Endothelial cell of umbilical vein (primary cell): ENCODE measurements at regions of chr18 and their contacts with region 1.

Region 1: DNA sequence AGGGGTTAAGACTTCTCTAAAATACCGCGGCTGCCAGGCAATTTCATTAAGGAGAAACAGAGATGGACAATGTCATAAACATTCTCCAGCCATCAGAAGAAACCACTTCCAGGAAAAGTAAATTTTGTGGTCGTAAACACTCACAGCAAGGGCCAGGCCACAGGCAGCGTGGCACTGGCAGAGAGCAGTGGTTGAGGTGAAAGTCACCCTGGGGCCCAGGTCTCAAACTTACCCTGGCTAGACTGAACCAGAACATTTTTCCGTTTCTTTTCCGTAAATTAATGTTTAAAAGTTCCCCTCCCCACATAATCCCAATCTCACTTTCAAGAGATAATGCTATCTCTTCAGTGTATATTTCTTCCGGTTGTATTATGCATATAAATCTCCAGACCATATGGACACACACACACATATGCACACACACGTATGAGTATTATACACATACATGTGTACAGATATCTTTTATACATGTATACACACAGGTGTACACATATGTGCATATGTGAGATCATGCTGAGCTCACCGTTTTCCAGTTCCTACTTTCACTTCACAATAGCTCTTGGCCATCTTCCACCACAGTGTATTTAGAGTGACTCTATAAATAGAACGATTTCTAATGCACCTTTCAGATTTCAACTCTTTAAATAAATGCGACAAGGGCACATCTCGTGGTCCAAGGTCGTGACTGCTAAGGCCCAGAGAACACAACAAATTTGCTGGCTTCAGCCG is 90.1 kb downstream of the MALT1 start:
- DNase-seq: no peak
- H3K4me3 ChIP-seq: no peak overlapping the region
- H3K27ac ChIP-seq: no peak overlapping the region
- H3K4me1 ChIP-seq: no peaks in the 10 kb centered on the region
- H3K27me3 ChIP-seq: peaks cover 2 to 8% of the 10 kb centered on the region in 2 experiments
- CTCF ChIP-seq: no peak
- POLR2A ChIP-seq: no peak

Region 2: DNA sequence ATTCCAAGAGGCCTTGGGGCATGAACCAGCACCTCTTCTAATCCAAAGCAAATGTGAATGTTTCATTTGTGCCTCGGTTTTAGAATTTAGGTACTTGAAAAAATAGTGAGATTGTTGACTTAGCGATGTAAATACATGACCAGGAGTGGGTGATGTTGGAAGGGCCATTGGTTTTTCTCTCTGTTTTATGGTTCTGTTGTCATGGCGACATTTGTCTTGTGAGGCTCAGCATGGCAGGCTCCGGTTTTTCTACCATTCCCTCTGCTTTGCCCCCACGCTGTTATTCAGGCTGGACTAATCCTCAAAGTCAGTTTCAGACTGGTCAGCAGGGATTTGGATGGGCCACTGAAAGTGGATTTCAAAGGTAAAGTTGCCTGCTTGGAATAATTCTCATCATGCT is 387.9 kb before region 1 on chr18:
- CTCF ChIA-PET with region 1: no interaction called
- POLR2A ChIA-PET with region 1: no interaction called
- dilution Hi-C with region 1: no loop called
- intact Hi-C with region 1: no loop called
- DNase-seq: no peak
- H3K4me3 ChIP-seq: no peak overlapping the region
- H3K27ac ChIP-seq: no peak overlapping the region
- H3K4me1 ChIP-seq: no peaks in the 10 kb centered on the region
- H3K27me3 ChIP-seq: no peaks in the 10 kb centered on the region
- CTCF ChIP-seq: no peak
- POLR2A ChIP-seq: no peak

Region 3: GRCh38 chr18:58529714-58530354 is 231.6 kb before region 1 on chr18:
- CTCF ChIA-PET with region 1: interaction called, 603 read pairs
- POLR2A ChIA-PET with region 1: no interaction called
- dilution Hi-C with region 1: loop called (anchors 25 kb)
- intact Hi-C with region 1: loop called (anchors 1 kb)
- DNase-seq: peak; percentile 49
- H3K4me3 ChIP-seq: no peak overlapping the region
- H3K27ac ChIP-seq: no peak overlapping the region
- H3K4me1 ChIP-seq: no peaks in the 10 kb centered on the region
- H3K27me3 ChIP-seq: peaks cover 6 to 21% of the 10 kb centered on the region in 2 experiments
- CTCF ChIP-seq: peak; percentile 65 to 74
- POLR2A ChIP-seq: no peak

Region 4: GRCh38 chr18:58541789-58542425 is 219.5 kb before region 1 on chr18:
- CTCF ChIA-PET with region 1: interaction called, 85 read pairs
- POLR2A ChIA-PET with region 1: no interaction called
- dilution Hi-C with region 1: loop called (anchors 25 kb)
- intact Hi-C with region 1: no loop called
- DNase-seq: peak; percentile 13
- H3K4me3 ChIP-seq: no peak overlapping the region
- H3K27ac ChIP-seq: no peak overlapping the region
- H3K4me1 ChIP-seq: peaks cover 3% of the 10 kb centered on the region
- H3K27me3 ChIP-seq: peaks cover 0 to 3% of the 10 kb centered on the region in 2 experiments
- CTCF ChIP-seq: no peak
- POLR2A ChIP-seq: no peak

Region 5: GRCh38 chr18:58671111-58671631 is 90.2 kb before region 1 on chr18 and contains the start of gene MALT1:
- CTCF ChIA-PET with region 1: interaction called, 15 read pairs
- POLR2A ChIA-PET with region 1: no interaction called
- dilution Hi-C with region 1: no loop called
- intact Hi-C with region 1: loop called (anchors 5 kb)
- DNase-seq: peak; percentile 85
- H3K4me3 ChIP-seq: peak within 1 kb of the TSS; percentile 60 to 72 (median 64)
- H3K27ac ChIP-seq: peak within 1 kb of the TSS; percentile 36
- H3K4me1 ChIP-seq: peaks cover 25% of the 10 kb centered on the region
- H3K27me3 ChIP-seq: peaks cover 5% of the 10 kb centered on the region in 2 experiments
- CTCF ChIP-seq: no peak
- POLR2A ChIP-seq: peak; percentile 50
- total RNA-seq, gene MALT1: 5.1 and 8.8 TPM in 2 replicates

Region 6: GRCh38 chr18:58745914-58746313 is 15.5 kb before region 1 on chr18:
- CTCF ChIA-PET with region 1: interaction called, 57 read pairs
- POLR2A ChIA-PET with region 1: no interaction called
- dilution Hi-C with region 1: no loop called
- intact Hi-C with region 1: no loop called
- DNase-seq: no peak
- H3K4me3 ChIP-seq: no peak overlapping the region
- H3K27ac ChIP-seq: no peak overlapping the region
- H3K4me1 ChIP-seq: no peaks in the 10 kb centered on the region
- H3K27me3 ChIP-seq: no peaks in the 10 kb centered on the region
- CTCF ChIP-seq: no peak
- POLR2A ChIP-seq: no peak